ENCODE measurements at regions of chr19 and their contacts with region 1.

Region 1: DNA sequence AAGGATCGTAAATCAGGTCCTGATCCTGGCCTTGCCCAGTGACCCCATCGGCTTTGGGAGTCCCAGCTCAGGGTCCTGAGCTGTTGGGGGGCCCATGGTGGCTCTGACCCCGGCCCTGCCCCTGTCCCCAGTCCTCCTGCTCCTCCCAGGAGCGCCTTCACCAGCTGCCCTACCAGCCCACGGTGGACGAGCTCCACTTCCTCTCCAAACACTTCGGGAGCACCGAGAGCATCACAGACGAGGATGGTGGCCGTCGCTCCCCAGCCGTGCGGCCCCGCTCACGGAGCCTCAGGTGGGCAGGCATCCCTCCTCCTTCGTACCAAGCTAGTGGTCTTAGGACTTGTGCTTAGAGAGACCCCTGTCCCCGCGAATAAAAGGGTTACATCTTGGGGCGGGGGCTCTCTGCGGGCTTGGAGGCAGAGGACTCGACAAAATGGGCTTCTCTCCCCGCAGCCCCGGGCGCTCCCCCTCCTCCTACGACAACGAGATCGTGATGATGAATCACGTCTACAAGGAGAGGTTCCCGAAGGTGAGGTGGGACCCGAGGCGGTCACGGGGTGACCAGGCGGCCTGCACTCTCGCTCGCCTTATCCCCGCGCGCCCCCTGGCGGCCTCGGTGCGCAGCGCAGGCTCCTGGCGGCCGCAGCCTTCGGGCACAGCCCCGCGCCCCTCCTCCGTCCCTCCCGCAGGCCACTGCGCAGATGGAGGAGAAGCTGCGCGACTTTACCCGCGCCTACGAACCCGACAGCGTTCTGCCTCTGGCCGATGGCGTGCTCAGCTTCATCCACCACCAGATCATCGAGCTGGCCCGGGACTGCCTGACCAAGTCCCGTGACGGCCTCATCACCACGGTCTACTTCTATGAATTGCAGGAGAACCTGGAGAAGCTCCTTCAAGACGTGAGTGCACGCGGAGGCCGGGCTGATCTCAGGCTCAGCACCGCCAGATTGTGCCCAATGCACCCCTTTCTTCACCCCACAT is 9.1 kb downstream of the MAST1 start:
- DNase-seq: peak; percentile 92
- ATAC-seq: peak; percentile 99
- H3K4me3 Mint-ChIP-seq: no peak overlapping the region
- H3K27ac Mint-ChIP-seq: no peak overlapping the region
- H3K4me1 Mint-ChIP-seq: peaks cover 7% of the 10 kb centered on the region
- H3K27me3 Mint-ChIP-seq: peaks cover 20% of the 10 kb centered on the region
- CTCF ChIP-seq: peak; percentile 86

Region 2: DNA sequence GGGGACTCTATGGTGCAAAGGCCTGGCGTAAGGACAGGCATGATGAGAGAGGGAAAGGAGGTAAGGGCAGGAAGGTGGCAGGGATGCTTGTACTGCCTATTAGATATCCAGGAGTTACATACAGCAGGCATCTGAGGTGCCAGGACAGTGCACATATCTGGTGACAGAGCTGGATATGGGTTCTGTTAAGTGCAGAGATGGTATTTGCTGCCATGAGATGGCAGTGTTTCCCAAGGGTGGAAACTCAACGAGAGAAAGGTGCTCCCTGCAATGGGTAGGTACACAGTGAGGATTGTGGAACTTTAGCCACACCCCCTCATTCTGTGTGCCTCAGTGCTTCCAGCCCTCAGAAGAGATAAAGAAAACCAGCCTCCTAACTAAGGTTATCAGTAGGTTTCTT is 130.6 kb before region 1 on chr19:
- CTCF ChIA-PET with region 1: interaction called, 3 read pairs
- POLR2A ChIA-PET with region 1: no interaction called
- intact Hi-C with region 1: loop called (anchors 2 kb)
- DNase-seq: no peak
- ATAC-seq: peak; percentile 75
- H3K4me3 Mint-ChIP-seq: no peak overlapping the region
- H3K27ac Mint-ChIP-seq: no peak overlapping the region
- H3K4me1 Mint-ChIP-seq: peaks cover 24% of the 10 kb centered on the region
- H3K27me3 Mint-ChIP-seq: no peaks in the 10 kb centered on the region
- CTCF ChIP-seq: no peak

Region 3: GRCh38 chr19:12757544-12758274 is 89.7 kb before region 1 on chr19:
- CTCF ChIA-PET with region 1: interaction called, 149 read pairs
- POLR2A ChIA-PET with region 1: no interaction called
- intact Hi-C with region 1: loop called (anchors 1 kb)
- DNase-seq: peak; percentile 69
- ATAC-seq: peak; percentile 75
- H3K4me3 Mint-ChIP-seq: no peak overlapping the region
- H3K27ac Mint-ChIP-seq: no peak overlapping the region
- H3K4me1 Mint-ChIP-seq: peaks cover 10% of the 10 kb centered on the region
- H3K27me3 Mint-ChIP-seq: peaks cover 22% of the 10 kb centered on the region
- CTCF ChIP-seq: peak; percentile 70

Region 4: GRCh38 chr19:12766051-12766521 is 81.4 kb before region 1 on chr19:
- CTCF ChIA-PET with region 1: interaction called, 149 read pairs
- POLR2A ChIA-PET with region 1: interaction called, 13 read pairs
- intact Hi-C with region 1: loop called (anchors 1 kb)
- DNase-seq: peak; percentile 84
- ATAC-seq: peak; percentile 68
- H3K4me3 Mint-ChIP-seq: peak overlapping the region; percentile 32
- H3K27ac Mint-ChIP-seq: no peak overlapping the region
- H3K4me1 Mint-ChIP-seq: peaks cover 12% of the 10 kb centered on the region
- H3K27me3 Mint-ChIP-seq: no peaks in the 10 kb centered on the region
- CTCF ChIP-seq: peak; percentile 34

Measured in activated B cell treated with CpG ODN at 0.5 μM for 24 hours (primary cell).